Naive thymus-derived CD4-positive, alpha-beta T cell (primary cell): ENCODE measurements at regions of chr20 and their contacts with region 1.

Region 1: GRCh38 chr20:56392282-56393137 is at the start of gene CSTF1:
- DNase-seq: peak; percentile 98 to 99 (median 99)
- ATAC-seq: peak; percentile 92
- H3K4me3 ChIP-seq: peak within 1 kb of the TSS; percentile 92
- H3K4me3 Mint-ChIP-seq: no peak within 1 kb of the TSS
- H3K27ac ChIP-seq: peak within 1 kb of the TSS; percentile 83
- H3K27ac Mint-ChIP-seq: peak within 1 kb of the TSS in 1 of 9 donors; percentile 91
- H3K4me1 ChIP-seq: peaks cover 17 to 19% of the 10 kb centered on the region in 2 donors
- H3K4me1 Mint-ChIP-seq: peaks cover 8 to 51% (median 31%) of the 10 kb centered on the region in 7 donors
- H3K27me3 ChIP-seq: no peaks in the 10 kb centered on the region
- H3K27me3 Mint-ChIP-seq: no peaks in the 10 kb centered on the region
- total RNA-seq, gene CSTF1: 16.4 to 50.7 (median 46.7) TPM

Region 2: DNA sequence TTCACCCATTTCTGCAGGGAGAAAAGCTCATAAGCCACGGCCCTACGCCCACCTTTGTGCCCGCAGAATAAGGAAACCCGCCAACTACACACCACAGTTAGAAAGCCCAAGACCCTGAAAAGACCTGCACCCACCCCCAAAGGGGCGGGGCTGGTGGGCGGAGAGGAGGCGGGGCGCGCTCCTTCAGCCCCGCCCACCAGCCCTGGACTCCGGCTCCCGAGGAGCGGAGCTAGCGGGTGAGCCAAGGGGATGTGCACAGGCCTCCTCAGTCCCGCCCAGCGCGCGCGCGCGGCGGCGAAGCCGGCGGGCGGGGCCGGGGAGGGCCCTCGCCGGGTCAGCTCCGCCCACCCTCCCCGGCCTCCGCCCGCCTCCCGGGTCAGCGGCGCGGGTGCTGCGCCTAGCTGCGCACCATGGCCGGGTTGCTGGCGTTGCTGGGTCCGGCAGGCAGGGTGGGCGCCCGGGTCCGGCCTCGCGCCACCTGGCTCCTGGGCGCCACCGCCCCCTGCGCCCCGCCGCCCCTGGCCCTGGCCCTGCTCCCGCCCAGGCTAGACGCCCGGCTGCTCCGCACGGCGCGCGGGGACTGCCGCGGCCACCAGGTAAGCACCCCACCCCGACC is 33.8 kb before region 1 on chr20 and contains the start of gene FAM210B:
- CTCF ChIA-PET with region 1: no interaction called
- POLR2A ChIA-PET with region 1: interaction called, 23 read pairs
- intact Hi-C with region 1: loop called (anchors 1 kb)
- DNase-seq: peak; percentile 63 to 82 (median 79)
- ATAC-seq: peak; percentile 99
- H3K4me3 ChIP-seq: peak within 1 kb of the TSS; percentile 72
- H3K4me3 Mint-ChIP-seq: peak within 1 kb of the TSS; percentile 88 to 96 (median 92)
- H3K27ac ChIP-seq: peak within 1 kb of the TSS; percentile 71
- H3K27ac Mint-ChIP-seq: peak within 1 kb of the TSS; percentile 54 to 91 (median 81)
- H3K4me1 ChIP-seq: peaks cover 0 to 14% of the 10 kb centered on the region in 2 donors
- H3K4me1 Mint-ChIP-seq: peaks cover 13 to 29% (median 22%) of the 10 kb centered on the region in 7 donors
- H3K27me3 ChIP-seq: no peaks in the 10 kb centered on the region
- H3K27me3 Mint-ChIP-seq: peaks cover 0 to 4% (median 0%) of the 10 kb centered on the region in 5 donors
- total RNA-seq, gene FAM210B: 8.1 to 31.8 (median 19.4) TPM

Region 3: GRCh38 chr20:56422076-56422823 is 29.7 kb after region 1 on chr20:
- CTCF ChIA-PET with region 1: interaction called, 3 read pairs
- POLR2A ChIA-PET with region 1: interaction called, 22 read pairs
- intact Hi-C with region 1: loop called in 1 of 2 experiments (anchors 1 kb)
- DNase-seq: no peak
- ATAC-seq: no peak
- H3K4me3 ChIP-seq: no peak overlapping the region
- H3K4me3 Mint-ChIP-seq: peak overlapping the region; percentile 11 to 78 (median 58)
- H3K27ac ChIP-seq: peak overlapping the region; percentile 36
- H3K27ac Mint-ChIP-seq: peak overlapping the region; percentile 50 to 98 (median 92)
- H3K4me1 ChIP-seq: peaks cover 33 to 58% of the 10 kb centered on the region in 2 donors
- H3K4me1 Mint-ChIP-seq: peaks cover 41 to 84% (median 64%) of the 10 kb centered on the region in 7 donors
- H3K27me3 ChIP-seq: no peaks in the 10 kb centered on the region
- H3K27me3 Mint-ChIP-seq: no peaks in the 10 kb centered on the region